Activated T-helper 1 cell treated with anti-CD3 and anti-CD28 coated beads, Interleukin-12 subunit alpha, Interleukin-12 subunit beta, Interleukin-2, Interleukin-4 antibody, amounts not matched to agents 30 ng/mL and 10 ng/mL and 1 ng/mL, durations not matched to agents 14 hours and 24 hours and 36 hours (primary cell): ENCODE measurements at regions of chr1 and their contacts with region 1.

Region 1: GRCh38 chr1:192445848-192446489 is 129.2 kb downstream of the RGS21 start:
- DNase-seq: peak; percentile 9
- H3K4me3 Mint-ChIP-seq: no peak overlapping the region
- H3K27ac Mint-ChIP-seq: no peak overlapping the region
- H3K4me1 Mint-ChIP-seq: no peaks in the 10 kb centered on the region
- H3K27me3 Mint-ChIP-seq: peaks cover 12% of the 10 kb centered on the region

Region 2: GRCh38 chr1:191155178-191155577 is 1290.8 kb before region 1 on chr1:
- intact Hi-C with region 1: no loop called
- DNase-seq: no peak
- H3K4me3 Mint-ChIP-seq: no peak overlapping the region
- H3K27ac Mint-ChIP-seq: no peak overlapping the region
- H3K4me1 Mint-ChIP-seq: no peaks in the 10 kb centered on the region
- H3K27me3 Mint-ChIP-seq: no peaks in the 10 kb centered on the region

Region 3: DNA sequence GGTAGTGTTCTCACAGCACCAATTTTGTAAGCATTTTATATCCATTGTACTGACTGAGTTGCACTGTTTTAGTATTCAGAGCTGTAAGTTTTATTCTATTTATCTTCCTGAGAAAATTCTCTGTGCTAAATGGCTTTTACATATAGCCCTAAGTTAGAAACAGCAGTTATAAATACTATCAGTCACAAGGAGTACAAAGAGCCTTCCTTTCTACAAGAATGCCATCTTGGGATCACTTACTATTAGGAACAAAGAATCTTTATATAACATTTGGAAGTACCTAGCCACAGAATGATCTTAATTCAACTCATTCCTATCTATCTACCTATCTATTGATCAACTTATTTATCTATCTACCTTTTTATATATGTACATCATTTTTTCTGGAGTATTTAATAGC is 711.6 kb before region 1 on chr1:
- intact Hi-C with region 1: no loop called
- DNase-seq: no peak
- H3K4me3 Mint-ChIP-seq: no peak overlapping the region
- H3K27ac Mint-ChIP-seq: no peak overlapping the region
- H3K4me1 Mint-ChIP-seq: no peaks in the 10 kb centered on the region
- H3K27me3 Mint-ChIP-seq: no peaks in the 10 kb centered on the region

Region 4: GRCh38 chr1:192070213-192070612 is 375.8 kb before region 1 on chr1:
- intact Hi-C with region 1: loop called (anchors 10 kb)
- DNase-seq: no peak
- H3K4me3 Mint-ChIP-seq: no peak overlapping the region
- H3K27ac Mint-ChIP-seq: no peak overlapping the region
- H3K4me1 Mint-ChIP-seq: no peaks in the 10 kb centered on the region
- H3K27me3 Mint-ChIP-seq: no peaks in the 10 kb centered on the region

Region 5: DNA sequence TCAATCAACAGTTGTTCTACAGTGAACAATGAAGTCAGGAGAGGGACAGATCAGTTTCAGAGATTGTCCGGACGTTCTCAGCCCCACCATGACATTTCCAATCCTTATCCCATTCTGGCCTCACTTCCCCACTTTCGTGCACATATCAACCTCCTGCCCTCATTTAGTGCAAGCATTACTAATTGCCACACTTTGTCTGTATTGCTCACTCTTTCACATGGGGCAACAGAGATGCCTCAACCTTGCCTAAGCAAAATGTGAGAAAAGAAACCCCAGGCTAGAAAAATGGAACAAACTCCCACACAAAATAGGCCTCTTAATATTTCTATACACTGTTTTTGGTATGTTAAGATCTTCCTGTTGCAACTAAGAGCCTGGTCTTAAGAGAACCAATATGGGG is 120.7 kb after region 1 on chr1:
- intact Hi-C with region 1: no loop called
- DNase-seq: no peak
- H3K4me3 Mint-ChIP-seq: no peak overlapping the region
- H3K27ac Mint-ChIP-seq: peak overlapping the region; percentile 13
- H3K4me1 Mint-ChIP-seq: peaks cover 50% of the 10 kb centered on the region
- H3K27me3 Mint-ChIP-seq: no peaks in the 10 kb centered on the region